Activated B cell treated with CpG ODN at 0.5 μM for 24 hours (primary cell): ENCODE measurements at regions of chr6 and their contacts with region 1.

Region 1: DNA sequence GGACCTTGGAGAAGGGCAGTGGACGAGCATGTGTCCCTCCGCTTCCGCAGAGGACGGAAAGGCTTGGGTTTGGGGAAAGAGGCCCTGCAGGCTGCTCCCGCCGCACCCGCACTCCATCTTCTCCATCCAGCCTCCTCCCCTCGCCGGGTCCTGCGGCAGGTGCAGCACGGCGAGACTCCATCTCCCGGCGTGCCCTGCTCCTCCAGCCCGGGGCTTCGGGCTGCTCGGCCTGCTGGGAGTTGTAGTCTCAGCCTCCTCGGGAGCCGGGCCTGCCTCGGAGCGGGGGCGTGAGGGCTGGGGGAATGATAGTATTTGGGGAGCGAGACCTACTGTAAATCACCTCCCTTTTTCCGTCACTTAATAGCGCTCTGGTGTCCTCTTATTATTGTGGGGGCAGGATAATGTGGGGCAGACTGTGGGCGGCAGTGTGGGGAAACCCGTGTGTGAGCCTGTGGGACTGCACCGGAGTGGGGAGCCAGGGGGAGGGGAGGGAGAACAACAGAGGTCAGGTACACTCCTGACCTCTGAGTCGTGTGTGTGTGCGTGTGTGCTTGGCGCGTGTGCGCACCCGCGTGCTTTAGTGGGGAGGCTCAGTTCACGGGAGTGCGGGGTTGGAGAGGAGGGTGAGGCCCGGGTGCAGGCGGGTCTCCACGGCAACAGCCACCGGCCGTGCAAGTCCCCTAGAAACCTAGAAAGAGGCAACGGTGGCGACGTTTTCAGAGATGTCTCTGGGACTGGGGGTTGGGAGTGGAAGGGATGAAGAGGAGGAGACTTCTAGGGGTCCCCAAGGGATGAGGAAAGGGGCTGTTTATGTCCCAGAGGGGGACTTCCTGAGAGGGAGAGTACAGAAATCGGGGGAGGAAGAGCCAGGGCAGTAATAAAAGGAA is 4.1 kb downstream of the TTBK1 start:
- DNase-seq: peak; percentile 73
- ATAC-seq: peak; percentile 96
- H3K4me3 Mint-ChIP-seq: no peak overlapping the region
- H3K27ac Mint-ChIP-seq: peak overlapping the region; percentile 76
- H3K4me1 Mint-ChIP-seq: peaks cover 29% of the 10 kb centered on the region
- H3K27me3 Mint-ChIP-seq: peaks cover 17% of the 10 kb centered on the region
- CTCF ChIP-seq: no peak

Region 2: DNA sequence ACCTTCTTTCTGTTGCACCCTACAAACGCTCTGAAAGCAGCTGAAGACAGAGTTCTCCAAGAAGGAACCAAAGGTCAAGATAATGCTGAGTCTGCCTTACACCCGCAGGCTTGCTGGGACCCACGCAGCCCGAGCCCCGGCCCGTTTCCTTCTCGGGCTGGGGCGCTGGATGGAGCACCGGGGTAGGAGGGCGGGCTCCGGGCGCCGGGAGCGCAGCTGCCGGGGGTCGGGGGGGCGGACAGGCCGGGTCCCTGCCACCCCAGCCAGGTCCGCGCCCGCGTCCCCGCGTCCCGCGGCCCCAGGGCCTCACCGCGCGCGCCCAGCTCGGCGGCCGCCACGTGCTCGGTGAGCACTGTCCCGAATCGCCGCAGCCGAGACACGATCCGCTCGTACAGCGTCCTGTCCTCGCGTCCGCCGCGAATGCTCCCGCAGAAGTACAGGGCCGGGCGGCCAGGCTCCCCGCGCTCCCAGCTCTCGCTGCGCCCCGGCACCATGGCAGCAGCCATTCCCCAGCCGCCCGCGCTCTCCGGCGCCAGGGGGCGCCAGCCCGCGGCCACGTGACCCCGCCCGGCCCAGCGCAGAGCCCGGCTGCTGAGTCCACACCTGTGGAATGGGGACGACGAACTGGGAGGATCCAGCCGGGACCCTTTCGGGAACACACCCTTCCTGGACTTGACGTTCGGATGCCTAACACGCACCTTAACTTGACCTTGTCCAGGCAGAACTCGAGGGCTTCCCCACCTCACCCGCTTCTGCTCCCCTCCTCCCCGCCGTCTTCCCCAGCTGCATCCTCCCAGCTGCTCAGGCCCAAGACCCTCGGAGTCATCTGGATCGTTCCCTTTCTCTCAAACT is 18.2 kb before region 1 on chr6 and contains the start of gene DNPH1:
- CTCF ChIA-PET with region 1: interaction called, 3 read pairs
- POLR2A ChIA-PET with region 1: interaction called, 7 read pairs
- intact Hi-C with region 1: loop called (anchors 1 kb)
- DNase-seq: peak; percentile 87
- ATAC-seq: peak; percentile 69
- H3K4me3 Mint-ChIP-seq: peak within 1 kb of the TSS; percentile 87
- H3K27ac Mint-ChIP-seq: peak within 1 kb of the TSS; percentile 75
- H3K4me1 Mint-ChIP-seq: peaks cover 39% of the 10 kb centered on the region
- H3K27me3 Mint-ChIP-seq: no peaks in the 10 kb centered on the region
- CTCF ChIP-seq: peak; percentile 57
- total RNA-seq, gene DNPH1: 56.7 and 57.5 TPM in 2 replicates

Region 3: DNA sequence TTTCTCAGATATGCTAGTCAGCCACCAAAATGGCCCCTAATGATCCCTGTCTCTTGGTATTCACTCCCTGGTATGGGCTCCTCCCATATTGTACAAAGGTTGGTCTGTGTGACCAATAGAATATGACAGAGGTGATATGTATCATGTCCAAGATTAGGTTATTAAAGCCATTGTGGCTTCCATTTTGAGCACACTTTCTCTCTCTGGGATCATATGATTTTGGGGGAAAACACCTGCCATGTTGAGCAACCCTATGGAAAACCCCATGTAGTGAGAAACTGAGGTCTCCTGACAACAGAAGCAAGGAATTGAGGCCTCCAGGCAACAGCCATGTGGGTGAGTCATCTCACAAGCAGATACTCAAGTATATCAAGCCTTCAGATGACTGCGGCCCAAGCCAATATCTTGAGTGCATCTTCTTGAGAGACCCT is 129.2 kb after region 1 on chr6:
- CTCF ChIA-PET with region 1: no interaction called
- POLR2A ChIA-PET with region 1: no interaction called
- intact Hi-C with region 1: no loop called
- DNase-seq: no peak
- ATAC-seq: peak; percentile 67
- H3K4me3 Mint-ChIP-seq: peak overlapping the region; percentile 28
- H3K27ac Mint-ChIP-seq: peak overlapping the region; percentile 81
- H3K4me1 Mint-ChIP-seq: peaks cover 86% of the 10 kb centered on the region
- H3K27me3 Mint-ChIP-seq: no peaks in the 10 kb centered on the region
- CTCF ChIP-seq: no peak

Region 4: DNA sequence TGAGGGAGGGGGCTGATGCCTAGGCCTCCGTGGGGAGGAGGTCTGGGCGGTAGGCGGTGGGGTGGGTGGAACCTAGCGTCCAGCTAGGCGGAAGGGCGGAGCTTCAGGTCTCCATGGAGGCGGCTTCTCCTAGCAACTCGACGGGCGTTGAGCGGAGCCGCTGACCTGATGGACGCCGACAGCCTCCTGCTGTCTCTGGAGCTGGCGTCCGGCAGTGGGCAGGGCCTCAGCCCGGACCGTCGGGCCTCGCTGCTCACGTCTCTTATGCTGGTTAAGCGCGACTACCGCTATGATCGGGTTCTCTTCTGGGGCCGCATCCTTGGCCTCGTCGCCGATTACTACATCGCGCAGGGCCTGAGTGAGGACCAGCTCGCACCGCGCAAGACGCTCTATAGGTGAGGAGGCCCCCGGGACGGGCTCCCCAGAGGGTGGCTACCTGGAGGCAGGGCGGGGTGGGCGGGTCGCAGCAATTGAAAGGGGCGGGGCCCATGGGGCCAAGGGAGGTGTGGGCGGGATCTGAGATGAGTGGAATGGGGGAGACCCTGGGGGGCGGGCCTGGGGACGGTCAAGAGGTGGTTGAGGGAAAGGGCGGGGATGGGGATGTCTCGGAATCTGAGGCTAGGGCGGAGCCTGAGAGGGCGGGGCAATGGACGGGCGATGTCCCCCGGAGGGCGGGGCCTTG is 397.7 kb after region 1 on chr6 and contains the start of gene RSPH9:
- CTCF ChIA-PET with region 1: no interaction called
- POLR2A ChIA-PET with region 1: interaction called, 11 read pairs
- intact Hi-C with region 1: no loop called
- DNase-seq: peak; percentile 72
- ATAC-seq: peak; percentile 92
- H3K4me3 Mint-ChIP-seq: peak within 1 kb of the TSS; percentile 87
- H3K27ac Mint-ChIP-seq: peak within 1 kb of the TSS; percentile 24
- H3K4me1 Mint-ChIP-seq: peaks cover 11% of the 10 kb centered on the region
- H3K27me3 Mint-ChIP-seq: no peaks in the 10 kb centered on the region
- CTCF ChIP-seq: no peak
- total RNA-seq, gene RSPH9: 0.17 TPM in 1 of 2 replicates, not detected in the other

Region 5: GRCh38 chr6:43673444-43674084 is 426.2 kb after region 1 on chr6:
- CTCF ChIA-PET with region 1: no interaction called
- POLR2A ChIA-PET with region 1: no interaction called
- intact Hi-C with region 1: no loop called
- DNase-seq: no peak
- ATAC-seq: no peak
- H3K4me3 Mint-ChIP-seq: no peak overlapping the region
- H3K27ac Mint-ChIP-seq: no peak overlapping the region
- H3K4me1 Mint-ChIP-seq: peaks cover under 1% of the 10 kb centered on the region
- H3K27me3 Mint-ChIP-seq: no peaks in the 10 kb centered on the region
- CTCF ChIP-seq: no peak